Activated T-helper 1 cell treated with anti-CD3 and anti-CD28 coated beads, Interleukin-12 subunit alpha, Interleukin-12 subunit beta, Interleukin-2, Interleukin-4 antibody, amounts not matched to agents 30 ng/mL and 10 ng/mL and 1 ng/mL, durations not matched to agents 14 hours and 24 hours and 36 hours (primary cell): ENCODE measurements at regions of chr1 and their contacts with region 1.

Region 1: GRCh38 chr1:175033953-175034352 is 10.7 kb upstream of the MRPS14 start:
- DNase-seq: no peak
- H3K4me3 Mint-ChIP-seq: no peak overlapping the region
- H3K27ac Mint-ChIP-seq: no peak overlapping the region
- H3K4me1 Mint-ChIP-seq: peaks cover 10% of the 10 kb centered on the region
- H3K27me3 Mint-ChIP-seq: peaks cover 9% of the 10 kb centered on the region

Region 2: GRCh38 chr1:175124861-175125260 is 90.9 kb after region 1 on chr1:
- intact Hi-C with region 1: loop called (anchors 1 kb)
- DNase-seq: no peak
- H3K4me3 Mint-ChIP-seq: no peak overlapping the region
- H3K27ac Mint-ChIP-seq: no peak overlapping the region
- H3K4me1 Mint-ChIP-seq: no peaks in the 10 kb centered on the region
- H3K27me3 Mint-ChIP-seq: peaks cover 3% of the 10 kb centered on the region

Region 3: GRCh38 chr1:175146529-175147213 is 112.7 kb after region 1 on chr1:
- intact Hi-C with region 1: loop called (anchors 1 kb)
- DNase-seq: peak; percentile 38
- H3K4me3 Mint-ChIP-seq: no peak overlapping the region
- H3K27ac Mint-ChIP-seq: no peak overlapping the region
- H3K4me1 Mint-ChIP-seq: no peaks in the 10 kb centered on the region
- H3K27me3 Mint-ChIP-seq: peaks cover 21% of the 10 kb centered on the region

Region 4: DNA sequence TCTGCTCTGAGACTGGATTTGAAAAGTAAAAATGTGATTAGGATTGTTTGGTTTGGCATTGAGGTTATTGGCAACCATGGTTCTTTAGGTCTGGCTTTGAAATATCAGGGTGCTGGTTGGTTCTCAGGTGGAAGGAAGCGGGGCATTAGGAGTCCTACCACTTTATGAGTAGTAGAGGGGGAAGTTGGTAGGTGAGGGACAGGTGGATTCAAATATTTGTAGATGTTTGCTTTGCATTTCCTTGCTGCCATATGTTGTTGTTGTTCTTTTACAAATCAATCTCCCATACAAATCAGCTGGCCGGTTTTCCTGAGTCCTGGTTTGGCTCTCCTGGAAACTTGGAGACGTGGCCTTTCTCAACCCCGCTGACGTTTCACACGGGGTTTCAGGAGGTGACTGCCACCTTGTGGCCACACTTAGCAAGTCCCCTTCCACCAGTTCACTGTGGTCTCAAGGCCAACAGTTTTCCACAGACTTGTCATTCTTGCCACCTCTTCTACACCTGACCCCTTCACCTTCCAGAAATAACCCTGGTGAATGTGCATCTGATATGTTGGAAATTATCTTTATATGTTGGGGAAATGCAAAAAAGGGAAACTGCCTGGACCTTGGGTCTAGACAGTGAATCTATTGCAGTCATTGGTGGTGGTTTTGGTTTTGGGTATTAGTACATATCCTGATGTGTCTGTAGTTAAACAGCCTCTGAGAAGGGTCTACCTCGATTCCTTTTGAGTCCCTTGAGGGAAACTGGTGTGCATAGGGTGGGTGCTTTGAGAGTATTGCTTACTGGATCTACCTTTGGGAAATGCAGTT is 285.7 kb after region 1 on chr1:
- intact Hi-C with region 1: loop called (anchors 1 kb)
- DNase-seq: peak; percentile 47
- H3K4me3 Mint-ChIP-seq: no peak overlapping the region
- H3K27ac Mint-ChIP-seq: no peak overlapping the region
- H3K4me1 Mint-ChIP-seq: peaks cover 12% of the 10 kb centered on the region
- H3K27me3 Mint-ChIP-seq: peaks cover 11% of the 10 kb centered on the region